Activated CD4-positive, alpha-beta T cell treated with anti-CD3 and anti-CD28 coated beads, Interleukin-2, amount 10 ng/mL, durations not matched to agents 24 days and 14 days (primary cell): ENCODE measurements at regions of chr6 and their contacts with region 1.

Region 1: DNA sequence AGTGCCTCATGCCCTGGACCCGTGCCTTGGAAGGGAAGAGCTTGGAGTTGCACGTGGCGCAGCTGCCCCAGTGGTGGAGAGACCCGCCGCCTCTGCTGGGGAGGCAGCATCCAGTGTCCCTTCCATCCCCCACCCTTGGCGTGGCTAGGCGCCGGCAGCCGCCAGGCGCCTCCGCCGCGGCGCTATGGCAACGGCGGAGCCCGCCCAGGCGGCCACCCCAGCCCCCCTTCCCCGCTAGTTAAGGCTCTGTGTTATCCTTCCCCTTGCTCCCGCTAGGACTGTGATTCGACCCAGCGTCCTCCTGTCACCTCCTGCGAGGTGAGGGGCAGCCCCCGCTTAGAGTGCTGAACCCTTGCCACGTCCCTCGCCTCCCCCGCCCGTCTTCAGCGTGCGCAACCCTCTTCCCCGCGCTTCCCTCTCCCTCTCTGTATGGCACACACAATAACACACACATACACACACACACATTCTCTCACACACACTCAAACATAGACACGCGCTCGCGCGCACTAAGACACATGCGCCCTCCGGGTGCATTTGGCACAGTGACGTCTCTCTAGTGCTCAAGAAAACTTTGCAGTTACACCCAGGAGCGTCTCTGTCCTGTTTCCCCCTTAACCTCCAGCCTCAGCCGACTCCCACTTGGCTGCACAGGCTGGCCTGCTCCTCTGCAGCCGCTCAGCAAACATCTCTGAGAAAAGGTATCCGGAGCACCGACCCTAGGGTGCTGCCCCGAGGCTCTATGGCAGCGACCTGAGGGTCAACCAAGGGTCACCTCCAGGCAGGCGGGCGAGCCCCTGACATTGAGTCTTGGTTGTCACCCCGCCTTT is 8.5 kb downstream of the GRIK2 start:
- DNase-seq: no peak
- H3K4me3 Mint-ChIP-seq: no peak overlapping the region
- H3K27ac Mint-ChIP-seq: peak overlapping the region; percentile 7
- H3K4me1 Mint-ChIP-seq: peaks cover 5% of the 10 kb centered on the region
- H3K27me3 Mint-ChIP-seq: peaks cover 54% of the 10 kb centered on the region

Region 2: DNA sequence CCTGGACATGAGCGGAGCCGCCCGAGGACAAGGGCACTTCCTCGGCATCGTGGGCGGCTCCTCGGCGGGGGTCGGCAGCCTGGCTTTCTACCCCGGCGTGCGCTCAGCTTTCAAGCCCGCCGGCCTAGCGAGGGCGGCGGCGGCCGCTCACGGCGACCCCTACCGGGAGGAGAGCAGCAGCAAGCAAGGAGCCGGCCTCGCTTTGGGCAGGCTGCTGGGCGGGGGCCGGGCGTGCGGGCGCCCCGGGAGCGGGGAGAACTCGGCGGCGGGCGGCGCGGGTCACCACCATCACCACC is 1788.7 kb before region 1 on chr6:
- intact Hi-C with region 1: loop called (anchors 5 kb)
- DNase-seq: peak; percentile 76
- H3K4me3 Mint-ChIP-seq: peak overlapping the region; percentile 55
- H3K27ac Mint-ChIP-seq: no peak overlapping the region
- H3K4me1 Mint-ChIP-seq: peaks cover 29% of the 10 kb centered on the region
- H3K27me3 Mint-ChIP-seq: peaks cover 75% of the 10 kb centered on the region

Region 3: GRCh38 chr6:100455230-100456124 is 946.5 kb before region 1 on chr6:
- intact Hi-C with region 1: loop called (anchors 2 kb)
- DNase-seq: no peak
- H3K4me3 Mint-ChIP-seq: no peak overlapping the region
- H3K27ac Mint-ChIP-seq: peak overlapping the region; percentile 54
- H3K4me1 Mint-ChIP-seq: peaks cover 4% of the 10 kb centered on the region
- H3K27me3 Mint-ChIP-seq: peaks cover 54% of the 10 kb centered on the region